Lower leg skin (tissue), 4 donors: ENCODE measurements at regions of chr11 and their contacts with region 1.

Region 1: DNA sequence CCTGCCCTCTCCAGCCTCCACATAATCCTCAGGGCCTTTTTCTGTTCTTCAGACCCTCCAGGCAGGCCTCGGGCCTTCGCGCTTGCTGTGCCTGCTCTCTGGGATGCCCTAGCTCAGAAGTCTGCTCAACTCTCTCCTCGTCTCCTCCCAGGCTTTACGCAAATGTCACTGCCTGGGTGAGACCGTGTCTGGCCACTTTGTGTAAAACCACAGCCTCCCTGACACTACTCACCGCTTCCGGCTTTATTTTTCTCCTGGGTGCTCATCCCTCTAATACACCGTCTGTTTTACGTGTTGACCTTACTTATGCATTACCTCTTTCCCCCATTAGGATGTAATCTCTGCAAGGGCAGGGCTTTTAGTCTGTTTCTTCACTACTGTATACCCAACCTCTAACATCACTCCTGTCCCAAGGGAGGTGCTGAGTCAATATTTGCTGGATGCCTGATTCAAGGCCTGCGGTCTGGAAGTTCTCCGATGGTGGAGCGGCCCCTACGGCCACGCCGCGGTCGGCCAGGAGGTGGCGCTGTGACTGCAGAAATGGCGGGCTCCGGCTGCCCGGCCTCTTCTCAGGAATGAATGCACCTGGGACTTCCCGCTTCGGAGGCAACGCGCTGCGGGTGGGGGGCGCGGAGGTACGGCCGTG is 58.2 kb upstream of the THY1 start:
- DNase-seq: peak; percentile 87 to 97
- H3K4me3 ChIP-seq: no peak overlapping the region
- CTCF ChIP-seq: peak in 1 of 3 donors; percentile 91
- POLR2A ChIP-seq: no peak

Region 2: GRCh38 chr11:119641983-119642745 is 161.0 kb after region 1 on chr11:
- intact Hi-C with region 1: loop called (anchors 10 kb)
- DNase-seq: no peak
- H3K4me3 ChIP-seq: no peak overlapping the region
- CTCF ChIP-seq: no peak
- POLR2A ChIP-seq: no peak

Region 3: DNA sequence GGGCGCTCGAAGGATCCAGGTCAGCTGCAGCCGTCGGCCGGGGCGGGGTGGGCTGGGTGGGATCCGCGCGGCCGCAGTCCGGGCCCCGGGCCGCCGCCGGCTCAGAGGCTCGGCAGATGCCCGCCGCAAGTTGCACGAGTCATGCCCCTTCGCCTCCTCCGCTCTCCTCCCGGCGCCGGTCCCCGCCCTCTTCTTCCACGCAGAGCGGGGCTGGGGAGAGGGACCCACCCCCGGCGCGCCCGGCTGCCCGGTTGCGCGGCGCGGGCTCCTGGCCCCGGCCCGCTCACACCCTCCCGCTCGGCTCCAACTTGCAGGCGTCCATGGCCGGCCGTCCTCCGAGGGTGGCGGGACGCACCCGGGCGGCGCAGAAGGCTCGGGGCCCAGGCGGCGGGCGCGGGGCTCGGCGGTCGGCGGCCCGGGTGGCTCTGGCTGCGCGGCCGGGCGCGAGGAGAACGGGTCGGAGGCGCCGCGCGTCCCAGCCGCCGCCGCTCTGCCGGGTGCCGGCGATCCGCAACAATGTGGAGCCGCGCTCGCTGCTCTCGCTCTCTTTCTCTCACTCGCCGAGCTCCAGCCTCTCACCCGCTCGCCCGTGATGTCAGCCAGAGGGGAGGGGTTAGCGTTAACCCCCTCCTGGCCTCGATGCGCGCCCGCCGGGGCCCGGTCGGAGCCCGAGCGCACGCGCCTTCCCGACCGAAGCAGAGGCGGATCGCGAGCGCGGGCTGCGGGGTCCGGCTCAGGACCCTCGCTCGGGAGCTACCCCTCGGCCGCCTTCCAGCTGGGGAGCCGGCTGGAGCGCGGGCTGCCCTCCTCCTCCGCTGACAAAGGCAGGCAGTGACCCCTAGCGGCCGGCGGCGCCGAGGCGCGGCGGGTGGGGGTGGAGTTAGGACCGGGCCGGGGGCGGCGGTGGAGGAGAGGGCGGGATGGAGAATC is 247.8 kb after region 1 on chr11 and contains the start of gene NECTIN1:
- intact Hi-C with region 1: loop called (anchors 5 kb)
- DNase-seq: peak; percentile 78 to 98
- H3K4me3 ChIP-seq: peak within 1 kb of the TSS; percentile 42
- CTCF ChIP-seq: peak in 1 of 3 donors; percentile 69
- POLR2A ChIP-seq: no peak
- total RNA-seq, gene NECTIN1: 111 to 142 (median 130) TPM

Region 4: GRCh38 chr11:120108154-120108865 is 627.2 kb after region 1 on chr11:
- intact Hi-C with region 1: loop called (anchors 5 kb)
- DNase-seq: peak in 1 of 2 donors; percentile 94
- H3K4me3 ChIP-seq: no peak overlapping the region
- CTCF ChIP-seq: peak in 1 of 3 donors; percentile 56
- POLR2A ChIP-seq: no peak